Right ventricle myocardium inferior (tissue), 1 donor: ENCODE measurements at regions of chr12 and their contacts with region 1.

Region 1: DNA sequence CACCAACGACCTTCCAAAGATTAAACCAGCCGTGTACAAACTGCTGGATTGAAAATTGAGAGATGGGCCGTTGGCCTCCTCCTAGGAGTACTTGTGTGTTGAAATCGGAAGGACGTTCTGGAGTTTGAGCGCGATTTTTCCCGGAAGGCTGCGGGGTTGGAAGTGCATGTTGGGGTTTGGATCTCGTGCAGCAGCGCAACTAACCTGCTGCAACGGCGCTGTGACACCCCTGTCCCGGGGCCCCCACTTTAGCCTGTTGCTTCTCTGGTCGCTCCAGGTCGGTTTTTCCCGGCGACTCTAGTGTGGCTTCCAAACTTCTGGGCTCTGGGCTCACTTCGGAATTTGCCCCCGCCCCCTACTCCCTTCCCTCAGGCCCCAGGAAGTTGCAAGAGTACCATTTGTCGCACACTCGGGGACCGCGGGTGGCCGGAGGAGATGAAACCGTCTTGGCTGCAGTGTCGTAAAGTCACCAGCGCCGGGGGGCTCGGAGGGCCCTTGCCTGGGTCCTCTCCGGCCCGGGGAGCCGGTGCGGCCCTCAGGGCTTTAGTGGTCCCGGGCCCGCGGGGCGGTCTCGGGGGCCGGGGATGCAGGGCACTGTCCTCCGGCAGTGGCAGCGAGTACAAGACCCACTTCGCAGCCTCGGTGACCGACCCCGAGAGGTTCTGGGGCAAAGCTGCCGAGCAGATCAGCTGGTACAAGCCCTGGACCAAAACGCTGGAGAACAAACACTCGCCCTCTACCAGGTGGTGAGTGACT is at the start of gene ACSS3:
- DNase-seq: peak; percentile 80
- ATAC-seq: peak; percentile 91
- total RNA-seq, gene ACSS3: 20.4 TPM

Region 2: GRCh38 chr12:81212996-81213696 is 135.3 kb after region 1 on chr12:
- intact Hi-C with region 1: loop called (anchors 5 kb)
- DNase-seq: no peak
- ATAC-seq: no peak